ENCODE measurements at regions of chr10 and their contacts with region 1.

Region 1: GRCh38 chr10:23293145-23293724 is 51.4 kb downstream of the C10orf67 start:
- DNase-seq: peak; percentile 66
- ATAC-seq: peak; percentile 78
- H3K4me3 Mint-ChIP-seq: no peak overlapping the region
- H3K27ac Mint-ChIP-seq: no peak overlapping the region
- H3K4me1 Mint-ChIP-seq: no peaks in the 10 kb centered on the region
- H3K27me3 Mint-ChIP-seq: peaks cover 9% of the 10 kb centered on the region

Region 2: DNA sequence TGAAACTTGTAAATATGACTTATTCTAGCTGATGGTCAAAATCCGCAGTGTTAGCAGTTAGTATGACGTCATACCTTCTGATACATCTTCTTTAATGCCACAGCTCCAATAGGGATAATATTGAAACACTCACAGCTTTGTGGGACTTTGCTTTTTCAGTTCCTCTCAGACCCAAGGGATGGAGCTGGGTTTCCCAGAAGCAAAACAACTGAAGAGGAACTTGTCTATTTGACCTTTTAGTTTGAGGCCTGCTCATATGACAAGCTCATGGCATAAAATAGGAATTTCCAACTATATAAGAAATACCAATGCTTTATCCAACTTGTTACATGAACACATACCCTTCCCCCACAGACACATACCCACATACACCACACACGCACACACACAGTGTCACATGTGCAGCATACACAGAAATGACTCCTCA is 83.0 kb after region 1 on chr10:
- CTCF ChIA-PET with region 1: no interaction called
- POLR2A ChIA-PET with region 1: no interaction called
- intact Hi-C with region 1: no loop called
- DNase-seq: no peak
- ATAC-seq: no peak
- H3K4me3 Mint-ChIP-seq: no peak overlapping the region
- H3K27ac Mint-ChIP-seq: no peak overlapping the region
- H3K4me1 Mint-ChIP-seq: peaks cover 6% of the 10 kb centered on the region
- H3K27me3 Mint-ChIP-seq: no peaks in the 10 kb centered on the region

Region 3: GRCh38 chr10:24201503-24202180 is 908.4 kb after region 1 on chr10:
- CTCF ChIA-PET with region 1: no interaction called
- POLR2A ChIA-PET with region 1: no interaction called
- intact Hi-C with region 1: loop called in 1 of 2 experiments (anchors 5 kb)
- DNase-seq: no peak
- ATAC-seq: no peak
- H3K4me3 Mint-ChIP-seq: no peak overlapping the region
- H3K27ac Mint-ChIP-seq: no peak overlapping the region
- H3K4me1 Mint-ChIP-seq: peaks cover 8% of the 10 kb centered on the region
- H3K27me3 Mint-ChIP-seq: peaks cover 20% of the 10 kb centered on the region

Measured in activated CD4-positive, alpha-beta T cell treated with anti-CD3 and anti-CD28 coated beads for 36 hours (primary cell).